Left ventricle myocardium inferior (tissue), 1 donor: ENCODE measurements at regions of chr1 and their contacts with region 1.

Region 1: DNA sequence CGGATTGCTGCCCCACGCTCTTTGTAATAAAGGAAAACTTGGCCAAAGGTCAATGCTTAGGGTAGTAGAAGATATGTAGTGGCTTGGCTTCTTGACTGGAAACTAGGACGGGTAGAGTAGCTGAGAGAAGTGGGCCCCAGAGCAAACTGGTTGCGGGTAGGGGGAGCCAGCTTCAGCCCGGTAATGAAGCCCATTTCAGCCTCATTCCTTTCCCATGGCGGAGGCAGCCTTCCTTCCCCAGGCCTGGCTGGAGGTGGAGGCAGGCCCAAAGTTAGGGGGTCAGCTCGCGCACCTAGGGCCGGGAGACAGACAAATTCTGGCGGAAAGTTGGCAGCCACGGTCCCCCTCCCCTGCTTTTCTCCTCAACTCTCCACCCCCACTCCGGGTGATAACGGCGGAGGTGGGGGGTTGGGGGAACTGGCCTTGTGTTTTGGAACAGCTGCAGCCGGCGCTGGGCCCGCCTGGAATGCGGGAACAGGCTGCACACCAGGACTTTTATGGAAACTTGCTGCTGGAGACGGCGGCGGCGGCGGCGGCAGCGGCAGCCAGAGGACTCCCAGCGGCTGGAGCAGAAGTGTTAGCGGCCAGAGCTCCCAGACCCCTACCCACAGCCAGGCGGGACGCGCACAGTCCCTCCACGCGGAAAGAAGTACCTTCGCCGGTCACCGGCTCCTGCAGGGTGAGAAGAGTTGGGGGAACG is at the start of gene NEXN:
- DNase-seq: peak; percentile 90
- H3K4me3 ChIP-seq: peak within 1 kb of the TSS; percentile 85
- H3K27ac ChIP-seq: peak within 1 kb of the TSS; percentile 98
- H3K4me1 ChIP-seq: peaks cover 31% of the 10 kb centered on the region
- H3K27me3 ChIP-seq: no peaks in the 10 kb centered on the region
- CTCF ChIP-seq: no peak
- total RNA-seq, gene NEXN: 391 TPM

Region 2: DNA sequence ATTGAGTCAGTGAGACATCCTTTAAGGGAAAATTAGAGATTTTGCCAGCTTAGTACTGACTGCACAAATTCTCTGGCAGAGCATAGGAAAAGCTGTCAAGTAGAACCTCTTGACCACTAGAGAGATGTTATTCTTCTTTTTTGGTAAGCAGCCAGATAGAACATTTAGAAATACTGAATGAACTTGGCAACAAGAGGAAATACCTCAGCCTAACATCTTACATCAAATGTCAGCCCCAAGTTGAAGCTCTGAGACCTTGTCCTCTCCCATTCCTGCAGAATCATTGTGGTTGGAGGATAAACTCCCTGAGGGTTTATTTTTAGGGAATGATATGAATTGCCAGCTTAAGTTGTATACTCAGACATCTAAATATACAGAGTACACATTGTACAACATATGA is 55.3 kb before region 1 on chr1:
- intact Hi-C with region 1: loop called (anchors 5 kb)
- DNase-seq: no peak
- H3K4me3 ChIP-seq: peak overlapping the region; percentile 38
- H3K27ac ChIP-seq: peak overlapping the region; percentile 91
- H3K4me1 ChIP-seq: peaks cover 84% of the 10 kb centered on the region
- H3K27me3 ChIP-seq: no peaks in the 10 kb centered on the region
- CTCF ChIP-seq: no peak

Region 3: GRCh38 chr1:77857552-77857951 is 30.7 kb before region 1 on chr1:
- intact Hi-C with region 1: no loop called
- DNase-seq: no peak
- H3K4me3 ChIP-seq: no peak overlapping the region
- H3K27ac ChIP-seq: no peak overlapping the region
- H3K4me1 ChIP-seq: peaks cover 19% of the 10 kb centered on the region
- H3K27me3 ChIP-seq: no peaks in the 10 kb centered on the region
- CTCF ChIP-seq: no peak